H1 (cell line): ENCODE measurements at regions of chr5 and their contacts with region 1.

Region 1: DNA sequence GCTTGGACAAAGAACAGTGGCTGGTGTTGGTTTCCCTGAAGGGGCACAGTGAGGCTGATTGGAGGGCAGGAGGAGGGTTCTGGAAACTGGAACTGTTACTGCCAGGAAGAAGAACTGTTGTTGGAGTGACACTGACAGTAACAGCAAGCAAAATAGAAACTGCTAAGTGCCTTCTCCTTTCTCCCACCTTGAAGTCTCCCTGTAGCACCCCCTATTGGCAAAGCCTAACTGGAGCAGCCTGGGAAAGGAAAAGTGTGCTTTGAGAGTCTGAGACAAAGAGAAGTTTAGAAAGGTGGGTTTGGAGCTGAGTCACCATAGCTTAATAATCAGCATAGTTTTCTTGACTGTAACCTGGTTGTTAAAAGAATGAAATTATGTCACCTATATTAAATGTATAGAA is 2.5 kb upstream of the TMEM174 start:
- DNase-seq: peak; percentile 50 to 72
- H3K4me3 ChIP-seq: no peak overlapping the region
- H3K27ac ChIP-seq: no peak overlapping the region
- H3K4me1 ChIP-seq: no peaks in the 10 kb centered on the region
- H3K27me3 ChIP-seq: no peaks in the 10 kb centered on the region
- CTCF ChIP-seq: peak; percentile 34 to 89 (median 79)
- EP300 ChIP-seq: no peak
- POLR2A ChIP-seq: no peak
- RAD21 ChIP-seq: peak; percentile 64 to 79

Region 2: GRCh38 chr5:72920690-72921502 is 249.6 kb before region 1 on chr5:
- CTCF ChIA-PET with region 1: interaction called, 11 read pairs
- POLR2A ChIA-PET with region 1: no interaction called
- DNase-seq: no peak
- H3K4me3 ChIP-seq: no peak overlapping the region
- H3K27ac ChIP-seq: no peak overlapping the region
- H3K4me1 ChIP-seq: peaks cover 0 to 4% (median 0%) of the 10 kb centered on the region in 4 experiments; a peak in 1 of 7 replicates
- H3K27me3 ChIP-seq: no peaks in the 10 kb centered on the region
- CTCF ChIP-seq: peak in 1 of 3 experiments; percentile 32; a peak in 2 of 4 replicates
- EP300 ChIP-seq: no peak
- POLR2A ChIP-seq: no peak
- RAD21 ChIP-seq: peak in 1 of 2 experiments; percentile 70

Region 3: GRCh38 chr5:73135429-73136054 is 35.0 kb before region 1 on chr5:
- CTCF ChIA-PET with region 1: interaction called, 41 read pairs
- POLR2A ChIA-PET with region 1: interaction called, 3 read pairs
- DNase-seq: no peak
- H3K4me3 ChIP-seq: no peak overlapping the region
- H3K27ac ChIP-seq: no peak overlapping the region
- H3K4me1 ChIP-seq: peaks cover 0 to 10% (median 3%) of the 10 kb centered on the region in 4 experiments; a peak in 3 of 7 replicates
- H3K27me3 ChIP-seq: no peaks in the 10 kb centered on the region; a peak in 1 of 7 replicates
- CTCF ChIP-seq: peak in 2 of 3 experiments; percentile 38 to 42; a peak in 2 of 4 replicates
- EP300 ChIP-seq: no peak
- POLR2A ChIP-seq: no peak
- RAD21 ChIP-seq: peak; percentile 41 to 49

Region 4: GRCh38 chr5:73160239-73160671 is 10.3 kb before region 1 on chr5:
- CTCF ChIA-PET with region 1: interaction called, 17 read pairs
- POLR2A ChIA-PET with region 1: no interaction called
- DNase-seq: no peak
- H3K4me3 ChIP-seq: no peak overlapping the region
- H3K27ac ChIP-seq: no peak overlapping the region
- H3K4me1 ChIP-seq: 0 out of 7 replicates have a peak, but pooled peaks cover 0 to 2% (median 0%) of the 10 kb centered on the region in 4 experiments
- H3K27me3 ChIP-seq: no peaks in the 10 kb centered on the region
- CTCF ChIP-seq: no peak
- EP300 ChIP-seq: no peak
- POLR2A ChIP-seq: no peak
- RAD21 ChIP-seq: no peak

Region 5: GRCh38 chr5:73189871-73190376 is 19.4 kb after region 1 on chr5:
- CTCF ChIA-PET with region 1: interaction called, 12 read pairs
- POLR2A ChIA-PET with region 1: no interaction called
- DNase-seq: no peak
- H3K4me3 ChIP-seq: no peak overlapping the region
- H3K27ac ChIP-seq: no peak overlapping the region
- H3K4me1 ChIP-seq: peaks cover 2 to 8% (median 3%) of the 10 kb centered on the region in 4 experiments; a peak in 5 of 7 replicates
- H3K27me3 ChIP-seq: no peaks in the 10 kb centered on the region
- CTCF ChIP-seq: no peak
- EP300 ChIP-seq: no peak
- POLR2A ChIP-seq: no peak
- RAD21 ChIP-seq: no peak

Region 6: GRCh38 chr5:73233347-73234200 is 63.1 kb after region 1 on chr5:
- CTCF ChIA-PET with region 1: interaction called, 10 read pairs
- POLR2A ChIA-PET with region 1: no interaction called
- DNase-seq: peak in 1 of 2 experiments; percentile 76
- H3K4me3 ChIP-seq: peak overlapping the region; percentile 9 to 62 (median 40)
- H3K27ac ChIP-seq: no peak overlapping the region
- H3K4me1 ChIP-seq: peaks cover 4 to 30% (median 20%) of the 10 kb centered on the region in 4 experiments
- H3K27me3 ChIP-seq: peaks cover 55 to 82% (median 74%) of the 10 kb centered on the region in 4 experiments
- CTCF ChIP-seq: peak; percentile 28 to 30 (median 29); a peak in 3 of 4 replicates
- EP300 ChIP-seq: no peak
- POLR2A ChIP-seq: no peak
- RAD21 ChIP-seq: peak in 1 of 2 experiments; percentile 16; a peak in 1 of 4 replicates